ENCODE measurements at regions of chr1 and their contacts with region 1.

Region 1: GRCh38 chr1:41432481-41433280 is 51.8 kb downstream of the EDN2 start:
- DNase-seq: peak; percentile 83 to 99
- H3K4me3 ChIP-seq: no peak overlapping the region
- H3K27ac ChIP-seq: no peak overlapping the region
- H3K4me1 ChIP-seq: peaks cover 0 to 10% (median 5%) of the 10 kb centered on the region in 4 experiments; a peak in 5 of 7 replicates
- H3K27me3 ChIP-seq: no peaks in the 10 kb centered on the region
- CTCF ChIP-seq: peak; percentile 96 to 99 (median 99)
- EP300 ChIP-seq: no peak
- POLR2A ChIP-seq: no peak
- RAD21 ChIP-seq: peak; percentile 97 to 99

Region 2: GRCh38 chr1:41294216-41294615 is 138.5 kb before region 1 on chr1:
- CTCF ChIA-PET with region 1: interaction called, 18 read pairs
- POLR2A ChIA-PET with region 1: no interaction called
- DNase-seq: no peak
- H3K4me3 ChIP-seq: no peak overlapping the region
- H3K27ac ChIP-seq: no peak overlapping the region
- H3K4me1 ChIP-seq: no peaks in the 10 kb centered on the region
- H3K27me3 ChIP-seq: peaks cover 0 to 2% (median 0%) of the 10 kb centered on the region in 4 experiments; a peak in 1 of 7 replicates
- CTCF ChIP-seq: no peak
- EP300 ChIP-seq: no peak
- POLR2A ChIP-seq: no peak
- RAD21 ChIP-seq: no peak

Region 3: DNA sequence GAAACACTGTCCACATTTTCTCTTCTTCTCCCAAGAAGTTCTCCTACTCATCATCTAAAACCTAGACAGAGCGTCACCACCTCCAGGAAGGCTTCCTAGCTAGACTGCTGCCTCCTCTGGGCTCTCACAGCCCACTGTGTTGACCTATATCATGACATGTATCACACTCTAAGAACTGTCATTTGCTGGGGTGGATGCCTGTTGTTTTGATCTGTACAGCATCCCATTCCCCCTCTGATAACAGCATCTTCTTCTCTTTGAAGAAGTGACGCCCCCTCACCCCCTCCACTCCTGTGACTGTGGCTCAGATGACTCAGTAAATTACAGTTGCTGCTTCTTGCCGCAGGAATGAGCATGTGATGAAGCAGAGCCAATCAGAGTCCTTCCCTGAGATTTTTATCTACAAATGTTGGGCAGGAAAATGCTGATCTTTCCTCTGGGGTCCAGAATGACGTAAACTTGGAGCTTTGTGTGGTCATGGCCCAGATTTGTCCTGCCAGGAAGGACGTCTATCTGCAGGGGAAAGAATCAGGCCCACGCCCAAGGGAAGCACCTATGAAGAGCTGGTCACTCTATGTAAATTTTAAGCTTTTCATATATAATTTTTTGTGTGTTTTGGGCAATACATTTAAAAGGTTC is 99.4 kb before region 1 on chr1:
- CTCF ChIA-PET with region 1: interaction called, 420 read pairs
- POLR2A ChIA-PET with region 1: interaction called, 4 read pairs
- DNase-seq: peak in 1 of 2 experiments; percentile 23
- H3K4me3 ChIP-seq: no peak overlapping the region
- H3K27ac ChIP-seq: no peak overlapping the region
- H3K4me1 ChIP-seq: peaks cover 0 to 4% (median 4%) of the 10 kb centered on the region in 4 experiments; a peak in 5 of 7 replicates
- H3K27me3 ChIP-seq: no peaks in the 10 kb centered on the region
- CTCF ChIP-seq: no peak
- EP300 ChIP-seq: no peak
- POLR2A ChIP-seq: no peak
- RAD21 ChIP-seq: no peak

Region 4: DNA sequence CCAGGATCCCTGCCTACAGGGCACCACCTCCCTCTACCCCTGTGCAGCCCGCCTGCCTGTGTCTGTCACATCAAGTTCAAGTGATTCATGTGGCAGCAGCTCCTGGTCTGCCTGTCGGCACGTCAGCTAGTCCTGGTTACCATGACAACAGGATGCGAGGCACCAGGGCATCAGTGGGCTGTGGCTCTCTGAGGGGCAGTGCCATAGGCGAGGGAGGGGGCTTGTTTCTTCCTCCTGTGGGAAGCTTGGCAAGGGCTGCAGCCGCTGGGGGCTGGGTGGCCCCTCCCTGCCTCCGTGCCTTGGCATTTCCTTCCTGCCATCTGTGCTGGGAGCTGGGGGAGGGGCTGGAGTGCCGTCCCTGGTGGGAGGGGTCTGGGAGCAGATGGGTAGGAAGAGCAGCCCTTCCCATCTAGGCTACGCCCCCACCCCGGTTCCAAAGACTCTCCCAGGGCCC is 28.3 kb before region 1 on chr1:
- CTCF ChIA-PET with region 1: interaction called, 15 read pairs
- POLR2A ChIA-PET with region 1: interaction called, 3 read pairs
- DNase-seq: peak in 1 of 2 experiments; percentile 76
- H3K4me3 ChIP-seq: peak overlapping the region in 1 of 4 experiments; percentile 25; a peak in 1 of 8 replicates
- H3K27ac ChIP-seq: no peak overlapping the region
- H3K4me1 ChIP-seq: peaks cover 4 to 27% (median 14%) of the 10 kb centered on the region in 4 experiments
- H3K27me3 ChIP-seq: peaks cover 0 to 5% (median 2%) of the 10 kb centered on the region in 4 experiments; a peak in 4 of 7 replicates
- CTCF ChIP-seq: no peak
- EP300 ChIP-seq: no peak
- POLR2A ChIP-seq: no peak
- RAD21 ChIP-seq: no peak

Region 5: GRCh38 chr1:41455479-41456332 is 23.0 kb after region 1 on chr1:
- CTCF ChIA-PET with region 1: interaction called, 14 read pairs
- POLR2A ChIA-PET with region 1: no interaction called
- DNase-seq: no peak
- H3K4me3 ChIP-seq: no peak overlapping the region
- H3K27ac ChIP-seq: no peak overlapping the region
- H3K4me1 ChIP-seq: no peaks in the 10 kb centered on the region
- H3K27me3 ChIP-seq: no peaks in the 10 kb centered on the region
- CTCF ChIP-seq: no peak
- EP300 ChIP-seq: no peak
- POLR2A ChIP-seq: no peak
- RAD21 ChIP-seq: no peak

Region 6: DNA sequence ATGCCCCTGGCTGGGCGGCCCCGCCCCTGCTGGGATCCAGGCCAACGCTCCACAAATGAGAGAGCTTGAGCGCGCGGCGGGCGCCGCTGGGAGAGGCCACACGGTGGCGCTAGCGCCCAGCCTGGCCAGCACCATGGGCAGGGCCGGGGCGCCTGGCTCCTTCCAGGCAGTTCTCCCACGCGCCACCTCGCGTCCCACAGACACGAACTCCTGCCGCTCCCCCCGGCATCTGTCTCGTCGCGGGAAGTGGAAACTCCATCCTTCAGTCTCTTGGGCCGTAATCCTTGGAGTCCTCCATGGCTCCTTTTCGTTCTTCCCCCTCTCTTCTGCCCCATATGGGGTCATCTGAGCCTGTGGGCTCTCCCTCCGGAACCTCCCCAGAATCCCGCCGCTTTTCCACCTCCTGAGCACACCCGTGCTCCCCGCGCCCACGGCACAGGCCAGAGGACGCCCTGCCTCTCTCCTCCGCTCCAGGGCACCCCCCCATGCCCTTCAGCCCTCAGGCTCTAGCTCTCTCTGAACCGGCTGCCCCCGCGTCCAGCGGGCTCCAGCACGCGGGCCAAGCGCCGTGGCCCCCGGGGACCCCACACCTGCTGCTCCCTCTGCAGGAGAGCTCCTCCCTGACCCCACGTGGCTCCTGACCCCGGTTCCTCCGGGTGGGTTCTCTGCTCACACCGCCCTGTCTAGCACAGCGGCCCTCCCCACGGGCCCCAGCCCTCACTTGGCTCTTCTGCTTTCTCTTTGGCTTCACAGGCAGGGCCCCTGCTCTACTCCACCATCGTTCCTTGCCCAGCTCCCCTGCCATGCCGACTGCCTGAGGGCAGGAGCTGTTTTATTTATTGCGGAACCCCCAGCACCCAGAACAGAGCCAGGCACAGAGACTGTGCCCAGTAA is 83.7 kb after region 1 on chr1:
- CTCF ChIA-PET with region 1: interaction called, 10 read pairs
- POLR2A ChIA-PET with region 1: no interaction called
- DNase-seq: peak; percentile 62 to 99
- H3K4me3 ChIP-seq: peak overlapping the region; percentile 5 to 56 (median 30); a peak in 6 of 8 replicates
- H3K27ac ChIP-seq: no peak overlapping the region
- H3K4me1 ChIP-seq: peaks cover 6 to 8% (median 8%) of the 10 kb centered on the region in 4 experiments
- H3K27me3 ChIP-seq: peaks cover 0 to 9% (median 5%) of the 10 kb centered on the region in 4 experiments; a peak in 5 of 7 replicates
- CTCF ChIP-seq: peak; percentile 87 to 93 (median 88)
- EP300 ChIP-seq: no peak
- POLR2A ChIP-seq: no peak
- RAD21 ChIP-seq: peak; percentile 73 to 77

Region 7: GRCh38 chr1:41726899-41727748 is 294.4 kb after region 1 on chr1:
- CTCF ChIA-PET with region 1: no interaction called
- POLR2A ChIA-PET with region 1: no interaction called
- DNase-seq: no peak
- H3K4me3 ChIP-seq: no peak overlapping the region
- H3K27ac ChIP-seq: no peak overlapping the region
- H3K4me1 ChIP-seq: peaks cover 0 to 3% (median 0%) of the 10 kb centered on the region in 4 experiments; a peak in 1 of 7 replicates
- H3K27me3 ChIP-seq: no peaks in the 10 kb centered on the region
- CTCF ChIP-seq: peak in 2 of 3 experiments; percentile 12 to 25; a peak in 2 of 4 replicates
- EP300 ChIP-seq: no peak
- POLR2A ChIP-seq: no peak
- RAD21 ChIP-seq: peak; percentile 22 to 36; a peak in 3 of 4 replicates

Measured in H1 (cell line).